ENCODE measurements at regions of chr15 and their contacts with region 1.

Region 1: DNA sequence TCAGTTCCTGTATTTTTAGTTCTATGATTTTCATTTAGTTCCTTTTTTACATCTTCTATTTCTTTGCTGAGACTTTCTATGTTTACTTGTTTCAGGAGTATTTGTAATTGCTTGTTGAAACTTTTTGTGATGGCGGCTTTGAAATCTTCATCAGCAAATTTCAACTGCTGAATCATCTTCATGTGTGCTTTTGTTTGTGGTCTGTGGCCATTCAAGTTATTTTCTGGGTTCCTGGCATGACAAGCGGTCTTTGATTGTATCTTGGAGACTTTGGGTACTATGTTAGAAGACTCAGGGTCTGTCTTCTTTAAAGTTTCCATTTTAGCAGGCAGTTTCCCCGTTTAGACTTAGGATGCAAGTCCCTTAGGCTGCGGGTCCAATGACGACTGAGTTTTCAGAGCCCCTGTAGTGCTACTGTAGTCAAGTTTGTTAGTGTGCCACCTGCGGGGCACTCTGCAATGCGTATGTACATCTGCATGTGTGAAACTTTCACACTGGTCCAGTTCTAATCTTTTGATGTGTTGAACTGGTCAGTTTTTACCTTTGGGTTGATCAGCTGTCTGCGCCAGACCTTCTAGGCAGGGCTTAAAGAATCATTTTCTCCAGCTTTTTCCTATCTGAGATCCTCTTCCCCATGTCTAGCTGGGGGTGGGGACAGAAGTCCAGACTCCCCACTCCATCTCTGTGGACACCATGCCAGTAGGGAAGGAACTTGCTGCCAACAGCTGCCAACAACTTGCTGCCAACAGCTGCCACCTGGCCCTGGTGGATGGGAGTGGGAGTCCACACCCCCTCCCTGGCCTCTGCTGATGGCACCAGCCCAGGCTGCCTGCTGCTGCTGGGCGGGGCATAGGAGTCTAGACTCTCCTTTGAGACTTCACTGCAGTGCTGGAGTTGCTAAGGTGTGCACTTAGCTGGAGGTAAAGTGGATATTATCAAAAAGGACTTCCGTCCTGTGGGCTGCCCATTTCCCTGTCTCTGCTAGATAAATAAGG is 190.9 kb downstream of the TJP1 start:
- DNase-seq: peak; percentile 30
- H3K4me3 ChIP-seq: no peak overlapping the region
- H3K27ac ChIP-seq: no peak overlapping the region
- H3K4me1 ChIP-seq: peaks cover 0 to 4% of the 10 kb centered on the region in 2 experiments; a peak in 1 of 4 replicates
- H3K27me3 ChIP-seq: peaks cover 10% of the 10 kb centered on the region; the same call in 1 of the 2 replicates
- CTCF ChIP-seq: no peak
- EP300 ChIP-seq: no peak
- RAD21 ChIP-seq: no peak

Region 2: GRCh38 chr15:29613951-29614382 is 17.4 kb before region 1 on chr15:
- CTCF ChIA-PET with region 1: interaction called, 12 read pairs
- POLR2A ChIA-PET with region 1: no interaction called
- DNase-seq: peak; percentile 34
- H3K4me3 ChIP-seq: no peak overlapping the region
- H3K27ac ChIP-seq: no peak overlapping the region
- H3K4me1 ChIP-seq: peaks cover 0 to 12% of the 10 kb centered on the region in 2 experiments; a peak in 2 of 4 replicates
- H3K27me3 ChIP-seq: no peaks in the 10 kb centered on the region
- CTCF ChIP-seq: peak; percentile 30; the same call in 1 of the 2 replicates
- EP300 ChIP-seq: no peak
- RAD21 ChIP-seq: peak; percentile 15; the same call in 1 of the 2 replicates

Region 3: DNA sequence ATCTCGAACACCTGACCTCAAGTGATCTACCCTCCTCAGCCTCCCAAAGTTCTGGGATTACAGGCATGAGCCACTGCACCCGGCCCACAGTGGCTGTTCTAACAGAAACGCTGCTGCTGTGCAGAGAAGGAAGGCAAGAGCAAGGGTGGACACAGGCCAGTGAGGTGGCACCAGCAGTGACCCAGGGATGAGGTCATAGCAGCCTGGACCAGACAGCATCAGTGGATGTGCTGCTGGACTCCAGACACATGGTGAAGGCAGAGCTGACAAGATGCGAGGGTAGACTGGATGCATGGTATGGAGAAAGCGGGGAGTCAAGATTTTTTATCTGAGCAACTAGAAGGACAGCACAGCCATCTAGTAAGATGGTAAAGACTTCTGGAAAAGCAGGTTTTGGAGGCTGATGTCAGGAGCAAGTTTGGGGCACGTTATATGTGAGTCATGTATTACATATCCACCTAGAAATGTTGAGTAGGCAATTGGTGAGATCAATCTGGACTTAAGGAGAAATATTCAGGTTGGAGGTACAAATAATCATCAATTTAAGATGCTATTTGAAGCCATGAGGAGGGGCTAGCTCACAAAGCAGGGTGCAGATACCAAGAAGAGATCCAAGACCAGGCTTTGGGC is 213.0 kb after region 1 on chr15:
- CTCF ChIA-PET with region 1: no interaction called
- POLR2A ChIA-PET with region 1: no interaction called
- DNase-seq: no peak
- H3K4me3 ChIP-seq: no peak overlapping the region
- H3K27ac ChIP-seq: no peak overlapping the region
- H3K4me1 ChIP-seq: no peaks in the 10 kb centered on the region; a peak in 1 of 4 replicates
- H3K27me3 ChIP-seq: no peaks in the 10 kb centered on the region
- CTCF ChIP-seq: no peak
- EP300 ChIP-seq: no peak
- RAD21 ChIP-seq: no peak

Region 4: DNA sequence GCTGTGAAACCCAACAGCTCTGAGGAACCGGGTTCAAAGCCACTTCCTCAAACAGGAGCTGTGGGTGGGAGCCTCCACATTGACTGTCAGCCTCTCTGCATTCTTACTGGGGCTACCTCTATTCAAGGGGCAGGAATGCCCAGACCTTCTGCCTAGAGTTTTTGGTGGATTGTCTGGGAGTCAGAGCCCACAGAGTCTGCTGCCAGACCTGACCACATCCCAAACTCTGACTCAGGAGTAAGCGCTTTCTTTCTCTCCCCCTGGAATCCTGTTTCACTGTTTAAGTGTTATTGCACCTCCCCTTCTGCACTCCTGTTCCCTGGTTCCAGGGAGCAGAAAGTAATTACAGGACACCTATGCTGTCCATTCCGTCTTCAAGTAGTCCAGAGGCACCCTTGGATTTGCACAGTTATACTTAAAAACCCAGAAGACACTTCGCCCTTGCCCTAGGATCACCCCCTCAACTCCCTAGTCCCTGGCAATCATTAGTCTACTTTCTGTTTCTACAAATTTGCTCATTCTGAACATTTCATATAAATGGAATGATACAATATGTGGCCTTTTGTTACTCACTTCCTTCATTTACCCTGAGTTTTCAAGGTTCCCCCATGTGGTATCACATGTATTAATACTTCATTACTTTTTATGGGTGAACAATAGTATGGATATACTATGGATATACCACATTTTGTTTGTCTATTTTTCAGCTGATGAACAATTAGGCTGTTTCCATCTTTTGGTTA is 228.8 kb after region 1 on chr15:
- CTCF ChIA-PET with region 1: no interaction called
- POLR2A ChIA-PET with region 1: no interaction called
- DNase-seq: no peak
- H3K4me3 ChIP-seq: no peak overlapping the region
- H3K27ac ChIP-seq: no peak overlapping the region; a peak in 1 of 4 replicates
- H3K4me1 ChIP-seq: peaks cover 0 to 2% of the 10 kb centered on the region in 2 experiments; a peak in 1 of 4 replicates
- H3K27me3 ChIP-seq: no peaks in the 10 kb centered on the region; the same call in 1 of the 2 replicates
- CTCF ChIP-seq: no peak
- EP300 ChIP-seq: no peak
- RAD21 ChIP-seq: no peak

Measured in SK-N-SH (cell line).